ENCODE measurements at regions of chr1 and their contacts with region 1.

Region 1: GRCh38 chr1:229227298-229227919 is 43.5 kb upstream of the RAB4A start:
- H3K4me3 ChIP-seq: no peak overlapping the region
- H3K27ac ChIP-seq: no peak overlapping the region; the same call in 1 of the 2 replicates
- H3K4me1 ChIP-seq: peaks cover 65% of the 10 kb centered on the region
- CTCF ChIP-seq: no peak; the same call in none of the 2 replicates

Region 2: DNA sequence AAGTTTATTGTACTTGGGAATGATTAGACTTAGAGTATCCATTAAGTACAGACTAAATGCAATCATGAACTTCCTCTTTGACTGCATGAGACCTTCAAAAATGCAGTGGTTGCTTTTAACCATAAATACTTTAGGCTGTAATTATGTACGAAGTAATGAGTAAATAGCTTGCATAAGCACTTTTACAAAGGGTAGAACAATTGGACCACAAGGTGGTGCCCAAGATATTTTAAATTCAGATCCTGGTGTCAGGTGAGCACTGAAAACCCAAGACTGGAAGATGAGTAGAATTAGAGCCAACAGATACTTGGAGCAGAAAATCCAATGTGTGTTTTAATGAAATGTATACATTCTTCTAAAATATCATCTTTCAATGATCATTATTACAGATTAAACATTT is 535.5 kb before region 1 on chr1:
- CTCF ChIA-PET with region 1: interaction called, 115 read pairs
- POLR2A ChIA-PET with region 1: no interaction called
- H3K4me3 ChIP-seq: no peak overlapping the region
- H3K27ac ChIP-seq: no peak overlapping the region
- H3K4me1 ChIP-seq: peaks cover 7% of the 10 kb centered on the region
- CTCF ChIP-seq: peak; percentile 24; the same call in 1 of the 2 replicates

Region 3: GRCh38 chr1:228837817-228838716 is 389.3 kb before region 1 on chr1:
- CTCF ChIA-PET with region 1: interaction called, 12 read pairs
- POLR2A ChIA-PET with region 1: interaction called, 5 read pairs
- H3K4me3 ChIP-seq: no peak overlapping the region
- H3K27ac ChIP-seq: peak overlapping the region; percentile 65
- H3K4me1 ChIP-seq: peaks cover 43% of the 10 kb centered on the region
- CTCF ChIP-seq: no peak

Region 4: GRCh38 chr1:228913626-228914414 is 313.6 kb before region 1 on chr1:
- CTCF ChIA-PET with region 1: no interaction called
- POLR2A ChIA-PET with region 1: no interaction called
- H3K4me3 ChIP-seq: no peak overlapping the region
- H3K27ac ChIP-seq: no peak overlapping the region
- H3K4me1 ChIP-seq: no peaks in the 10 kb centered on the region
- CTCF ChIP-seq: no peak

Region 5: DNA sequence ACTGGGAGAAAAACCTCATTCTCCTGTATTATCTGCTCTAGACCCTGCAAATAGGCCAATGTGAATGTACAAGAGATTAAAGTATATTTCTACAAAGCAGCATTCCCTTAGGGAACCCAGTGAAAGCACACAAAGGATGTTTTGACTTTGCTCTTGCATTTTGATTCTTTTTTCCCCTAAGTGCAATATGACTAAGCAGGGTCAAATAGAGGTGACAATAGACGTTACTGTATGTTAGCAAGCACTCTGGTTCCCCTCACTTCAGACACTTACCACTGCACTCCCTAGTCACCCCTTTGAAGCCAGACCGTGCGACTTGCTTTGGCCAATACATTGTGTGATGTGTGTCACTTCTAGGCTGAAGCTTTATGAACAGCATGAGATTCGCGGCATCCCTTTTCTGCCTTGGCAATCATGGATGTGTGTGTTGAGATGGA is 282.5 kb before region 1 on chr1:
- CTCF ChIA-PET with region 1: interaction called, 11 read pairs
- POLR2A ChIA-PET with region 1: no interaction called
- H3K4me3 ChIP-seq: no peak overlapping the region
- H3K27ac ChIP-seq: no peak overlapping the region
- H3K4me1 ChIP-seq: no peaks in the 10 kb centered on the region
- CTCF ChIP-seq: no peak

Region 6: GRCh38 chr1:229130028-229130668 is 97.3 kb before region 1 on chr1:
- CTCF ChIA-PET with region 1: interaction called, 17 read pairs
- POLR2A ChIA-PET with region 1: no interaction called
- H3K4me3 ChIP-seq: no peak overlapping the region
- H3K27ac ChIP-seq: no peak overlapping the region
- H3K4me1 ChIP-seq: 0 out of 2 replicates have a peak, but pooled peaks cover 2% of the 10 kb centered on the region
- CTCF ChIP-seq: no peak

Region 7: DNA sequence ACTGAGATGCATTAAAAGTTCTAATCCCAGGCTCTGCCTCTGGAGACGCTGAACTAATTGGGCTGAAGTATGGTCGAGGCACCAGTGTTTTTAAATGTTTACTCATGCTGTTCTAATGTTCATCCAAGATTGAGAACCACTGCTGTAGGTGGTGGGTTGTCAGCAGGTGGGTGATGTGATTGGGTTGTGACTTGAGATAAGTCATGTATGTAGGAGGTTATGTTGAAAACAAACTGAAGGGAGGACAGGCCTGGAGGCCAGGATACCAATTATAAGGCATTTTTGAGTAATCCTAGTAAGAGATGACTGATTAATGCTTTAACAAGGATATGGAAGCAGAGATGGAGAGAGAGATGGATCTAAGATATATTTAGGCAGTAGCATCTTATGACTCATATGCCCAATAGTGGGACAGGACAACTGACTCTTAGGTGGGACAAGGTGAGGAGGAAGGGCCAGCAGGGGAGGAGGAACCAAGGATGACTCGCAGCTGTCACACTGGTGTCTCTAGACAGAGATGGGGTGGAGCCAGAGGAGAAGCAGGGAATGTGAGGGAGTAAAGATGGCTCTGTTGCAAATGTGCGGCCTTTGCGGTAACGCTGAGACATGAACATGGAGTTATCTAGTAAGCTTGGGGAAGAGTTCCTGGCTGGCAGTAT is 72.8 kb after region 1 on chr1:
- CTCF ChIA-PET with region 1: no interaction called
- POLR2A ChIA-PET with region 1: no interaction called
- H3K4me3 ChIP-seq: no peak overlapping the region
- H3K27ac ChIP-seq: no peak overlapping the region
- H3K4me1 ChIP-seq: no peaks in the 10 kb centered on the region
- CTCF ChIP-seq: no peak